WTC11 (cell line): ENCODE measurements at regions of chr11 and their contacts with region 1.

Region 1: GRCh38 chr11:67317205-67317887 is 14.0 kb downstream of the SSH3 start:
- DNase-seq: peak; percentile 99
- ATAC-seq: peak; percentile 83
- H3K4me3 Mint-ChIP-seq: peak overlapping the region; percentile 91
- H3K27ac Mint-ChIP-seq: peak overlapping the region; percentile 96
- H3K4me1 Mint-ChIP-seq: peaks cover 5% of the 10 kb centered on the region
- H3K27me3 Mint-ChIP-seq: peaks cover 41% of the 10 kb centered on the region
- CTCF ChIP-seq: peak; percentile 58

Region 2: DNA sequence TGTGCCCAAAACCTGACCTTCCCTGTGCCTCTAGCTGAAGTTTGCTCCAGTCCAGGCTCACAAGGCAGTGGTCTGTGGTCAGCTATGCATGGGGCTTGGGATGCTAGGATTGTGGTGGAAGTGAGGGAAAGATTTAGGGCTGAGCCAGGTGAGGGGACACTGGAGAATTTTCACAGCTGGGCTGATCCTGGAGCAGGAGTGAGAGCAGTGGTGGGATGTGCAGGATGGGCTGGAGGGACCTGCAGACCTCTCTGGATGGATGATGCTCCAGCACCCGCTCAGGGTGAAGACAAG is 222.2 kb before region 1 on chr11:
- CTCF ChIA-PET with region 1: interaction called, 11 read pairs
- POLR2A ChIA-PET with region 1: no interaction called
- DNase-seq: no peak
- ATAC-seq: no peak
- H3K4me3 Mint-ChIP-seq: no peak overlapping the region
- H3K27ac Mint-ChIP-seq: no peak overlapping the region
- H3K4me1 Mint-ChIP-seq: peaks cover 15% of the 10 kb centered on the region
- H3K27me3 Mint-ChIP-seq: no peaks in the 10 kb centered on the region
- CTCF ChIP-seq: peak; percentile 8; the same call in 1 of the 2 replicates

Region 3: GRCh38 chr11:67271541-67272284 is 45.6 kb before region 1 on chr11:
- CTCF ChIA-PET with region 1: interaction called, 25 read pairs
- POLR2A ChIA-PET with region 1: interaction called, 4 read pairs
- DNase-seq: peak; percentile 28
- ATAC-seq: 0 out of 2 replicates have a peak, but pooled peaks have one; percentile 4
- H3K4me3 Mint-ChIP-seq: peak overlapping the region; percentile 53; the same call in 1 of the 2 replicates
- H3K27ac Mint-ChIP-seq: peak overlapping the region; percentile 94; the same call in 1 of the 2 replicates
- H3K4me1 Mint-ChIP-seq: peaks cover 57% of the 10 kb centered on the region
- H3K27me3 Mint-ChIP-seq: no peaks in the 10 kb centered on the region; the same call in 1 of the 2 replicates
- CTCF ChIP-seq: no peak

Region 4: DNA sequence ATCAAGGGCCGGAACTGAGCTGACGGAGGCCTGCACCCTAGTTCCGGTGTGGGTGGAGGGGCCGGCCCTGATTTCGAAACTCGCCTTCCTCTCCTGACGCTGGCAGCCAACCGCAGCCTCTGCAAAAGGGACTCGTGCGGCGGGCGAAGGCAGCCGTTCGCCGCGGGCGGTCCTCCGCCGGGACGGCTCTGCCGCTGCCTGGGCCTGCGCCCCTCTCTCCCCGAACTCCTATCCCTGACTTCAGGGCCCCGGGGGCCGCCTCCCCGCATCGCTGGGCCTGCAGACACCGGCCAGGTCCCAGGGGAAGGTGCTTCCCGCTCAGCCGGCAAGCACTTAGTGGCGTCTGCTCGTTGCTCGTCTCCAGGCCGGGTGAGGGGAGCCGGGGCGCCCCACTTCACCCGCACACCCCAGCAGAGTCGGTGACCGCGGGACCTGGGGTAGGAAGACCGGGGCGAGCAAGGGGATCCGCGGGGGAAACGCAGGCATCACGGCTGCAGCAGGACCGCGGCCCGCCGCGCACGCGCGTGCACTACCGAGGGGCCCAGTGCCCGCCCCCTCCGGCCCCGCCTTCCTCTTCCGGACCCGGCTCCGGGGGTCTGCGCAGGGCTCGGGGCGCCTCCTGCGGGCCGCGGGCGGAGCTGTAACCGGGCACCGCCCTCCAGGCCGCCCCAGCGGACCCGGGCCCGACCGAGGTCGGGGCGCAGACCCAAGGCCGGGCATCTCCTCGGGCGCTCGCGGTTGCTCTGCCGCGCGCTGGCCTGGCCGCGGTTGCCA is 28.7 kb before region 1 on chr11:
- CTCF ChIA-PET with region 1: interaction called, 27 read pairs
- POLR2A ChIA-PET with region 1: no interaction called
- DNase-seq: peak; percentile 83
- ATAC-seq: peak; percentile 88
- H3K4me3 Mint-ChIP-seq: peak overlapping the region; percentile 66
- H3K27ac Mint-ChIP-seq: peak overlapping the region; percentile 95; the same call in 1 of the 2 replicates
- H3K4me1 Mint-ChIP-seq: peaks cover 15% of the 10 kb centered on the region
- H3K27me3 Mint-ChIP-seq: no peaks in the 10 kb centered on the region
- CTCF ChIP-seq: peak; percentile 26; the same call in 1 of the 2 replicates

Region 5: GRCh38 chr11:67345920-67346799 is 28.8 kb after region 1 on chr11:
- CTCF ChIA-PET with region 1: interaction called, 25 read pairs
- POLR2A ChIA-PET with region 1: no interaction called
- DNase-seq: no peak
- ATAC-seq: peak; percentile 82
- H3K4me3 Mint-ChIP-seq: no peak overlapping the region
- H3K27ac Mint-ChIP-seq: peak overlapping the region; percentile 41; the same call in 1 of the 2 replicates
- H3K4me1 Mint-ChIP-seq: peaks cover 9% of the 10 kb centered on the region
- H3K27me3 Mint-ChIP-seq: peaks cover 10% of the 10 kb centered on the region
- CTCF ChIP-seq: 0 out of 2 replicates have a peak, but pooled peaks have one; percentile 43

Region 6: GRCh38 chr11:67373925-67374618 is 56.7 kb after region 1 on chr11:
- CTCF ChIA-PET with region 1: interaction called, 11 read pairs
- POLR2A ChIA-PET with region 1: interaction called, 5 read pairs
- DNase-seq: peak; percentile 77
- ATAC-seq: peak; percentile 6
- H3K4me3 Mint-ChIP-seq: peak overlapping the region; percentile 88
- H3K27ac Mint-ChIP-seq: no peak overlapping the region
- H3K4me1 Mint-ChIP-seq: peaks cover 46% of the 10 kb centered on the region
- H3K27me3 Mint-ChIP-seq: peaks cover 82% of the 10 kb centered on the region
- CTCF ChIP-seq: peak; percentile 32; the same call in 1 of the 2 replicates

Region 7: DNA sequence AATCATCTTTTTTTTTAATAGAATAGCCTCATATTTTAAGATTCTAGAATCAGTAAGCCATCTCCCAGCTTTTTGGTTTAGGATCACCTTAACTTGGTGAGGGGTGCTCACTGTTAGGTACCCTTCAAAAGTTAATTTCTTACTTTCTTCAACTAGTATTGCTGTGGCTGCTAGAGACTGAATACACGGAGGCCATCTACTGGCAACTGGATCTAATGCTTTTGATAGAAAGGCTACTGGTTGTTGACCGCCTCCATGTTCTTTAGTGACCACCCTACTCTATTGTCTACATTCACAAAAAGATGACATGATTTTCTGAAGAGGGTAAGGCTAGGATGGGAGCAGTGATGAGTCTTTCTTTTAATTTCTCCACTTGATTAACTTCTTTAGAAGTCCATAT is 373.8 kb after region 1 on chr11:
- CTCF ChIA-PET with region 1: no interaction called
- POLR2A ChIA-PET with region 1: no interaction called
- DNase-seq: no peak
- ATAC-seq: peak; percentile 47
- H3K4me3 Mint-ChIP-seq: no peak overlapping the region
- H3K27ac Mint-ChIP-seq: no peak overlapping the region
- H3K4me1 Mint-ChIP-seq: no peaks in the 10 kb centered on the region
- H3K27me3 Mint-ChIP-seq: peaks cover 2% of the 10 kb centered on the region; the same call in 1 of the 2 replicates
- CTCF ChIP-seq: no peak